ENCODE measurements at regions of chr1 and their contacts with region 1.

Region 1: GRCh38 chr1:212284744-212285684 is at the start of gene PPP2R5A:
- DNase-seq: peak; percentile 96 to 100 (median 98)
- ATAC-seq: peak; percentile 86
- H3K4me3 ChIP-seq: peak within 1 kb of the TSS; percentile 99
- H3K4me3 Mint-ChIP-seq: peak within 1 kb of the TSS; percentile 100
- H3K27ac ChIP-seq: peak within 1 kb of the TSS; percentile 90 to 98
- H3K27ac Mint-ChIP-seq: peak within 1 kb of the TSS; percentile 92
- H3K4me1 ChIP-seq: peaks cover 22% of the 10 kb centered on the region
- H3K4me1 Mint-ChIP-seq: peaks cover 37% of the 10 kb centered on the region
- H3K27me3 ChIP-seq: no peaks in the 10 kb centered on the region
- H3K27me3 Mint-ChIP-seq: peaks cover 4% of the 10 kb centered on the region
- CTCF ChIP-seq: peak; percentile 50
- total RNA-seq, gene PPP2R5A: 44.3 to 46.2 TPM

Region 2: DNA sequence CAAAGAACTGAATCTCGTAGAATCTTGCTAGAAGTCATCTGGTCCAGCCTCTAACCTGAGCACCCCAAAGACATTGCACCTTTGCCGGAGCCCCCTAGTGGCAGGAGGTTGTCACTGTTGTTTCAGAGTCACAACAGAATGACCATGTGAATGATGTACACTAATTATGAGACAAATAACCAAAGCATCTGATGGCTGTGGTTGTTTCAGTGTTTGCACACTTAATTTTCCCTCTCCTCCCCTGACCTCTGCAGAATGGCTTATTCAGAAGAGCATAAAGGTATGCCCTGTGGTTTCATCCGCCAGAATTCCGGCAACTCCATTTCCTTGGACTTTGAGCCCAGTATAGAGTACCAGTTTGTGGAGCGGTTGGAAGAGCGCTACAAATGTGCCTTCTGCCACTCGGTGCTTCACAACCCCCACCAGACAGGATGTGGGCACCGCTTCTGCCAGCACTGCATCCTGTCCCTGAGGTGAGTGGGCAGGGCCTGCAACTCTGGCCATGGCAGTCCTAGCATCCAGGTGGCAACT is 932.0 kb before region 1 on chr1:
- CTCF ChIA-PET with region 1: no interaction called
- POLR2A ChIA-PET with region 1: no interaction called
- intact Hi-C with region 1: no loop called
- DNase-seq: peak in 13 of 14 experiments; percentile 32 to 87 (median 56)
- ATAC-seq: peak; percentile 85
- H3K4me3 ChIP-seq: peak overlapping the region; percentile 28
- H3K4me3 Mint-ChIP-seq: peak overlapping the region; percentile 86
- H3K27ac ChIP-seq: peak overlapping the region; percentile 11 to 15
- H3K27ac Mint-ChIP-seq: peak overlapping the region; percentile 87
- H3K4me1 ChIP-seq: peaks cover 52% of the 10 kb centered on the region
- H3K4me1 Mint-ChIP-seq: peaks cover 71% of the 10 kb centered on the region
- H3K27me3 ChIP-seq: no peaks in the 10 kb centered on the region
- H3K27me3 Mint-ChIP-seq: no peaks in the 10 kb centered on the region
- CTCF ChIP-seq: peak; percentile 58

Region 3: GRCh38 chr1:211675230-211676105 is 609.5 kb before region 1 on chr1 and contains the start of gene NEK2:
- CTCF ChIA-PET with region 1: no interaction called
- POLR2A ChIA-PET with region 1: interaction called, 5 read pairs
- intact Hi-C with region 1: loop called (anchors 5 kb)
- DNase-seq: peak; percentile 70 to 93 (median 79)
- ATAC-seq: peak; percentile 94
- H3K4me3 ChIP-seq: peak within 1 kb of the TSS; percentile 67
- H3K4me3 Mint-ChIP-seq: peak within 1 kb of the TSS; percentile 92
- H3K27ac ChIP-seq: no peak within 1 kb of the TSS
- H3K27ac Mint-ChIP-seq: peak within 1 kb of the TSS; percentile 73
- H3K4me1 ChIP-seq: peaks cover 15% of the 10 kb centered on the region
- H3K4me1 Mint-ChIP-seq: peaks cover 7% of the 10 kb centered on the region
- H3K27me3 ChIP-seq: no peaks in the 10 kb centered on the region
- H3K27me3 Mint-ChIP-seq: no peaks in the 10 kb centered on the region
- CTCF ChIP-seq: no peak
- total RNA-seq, gene NEK2: not detected

Region 4: DNA sequence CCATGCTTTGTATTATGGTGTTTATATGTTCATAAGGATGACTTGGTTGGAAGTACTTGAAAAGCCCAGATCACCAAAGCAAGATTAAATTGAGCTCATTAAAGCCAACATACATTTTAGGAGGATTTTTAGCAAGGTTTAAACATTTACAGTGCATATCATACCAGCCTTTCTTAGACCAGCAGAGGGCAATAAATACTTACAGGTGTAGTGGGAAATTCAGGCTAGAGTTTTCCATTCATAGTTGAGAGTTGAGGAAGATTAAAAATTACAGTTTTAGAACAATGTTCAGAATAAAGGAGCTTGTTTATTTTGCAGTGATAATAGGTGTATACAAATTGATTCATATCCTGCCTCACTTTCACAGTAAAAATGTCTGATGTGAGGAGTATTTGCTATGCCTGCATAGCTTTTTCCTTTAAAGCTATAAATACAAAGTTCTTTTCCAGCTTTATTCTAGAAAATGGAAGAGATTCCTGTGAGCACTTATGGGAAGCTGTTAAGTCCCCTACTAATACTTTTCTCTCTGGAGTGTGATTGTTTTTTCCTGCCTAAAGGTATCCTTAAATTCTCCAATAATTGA is 214.2 kb before region 1 on chr1:
- CTCF ChIA-PET with region 1: interaction called, 25 read pairs
- POLR2A ChIA-PET with region 1: interaction called, 12 read pairs
- intact Hi-C with region 1: loop called in 1 of 2 experiments (anchors 1 kb)
- DNase-seq: peak in 3 of 14 experiments; percentile 68 to 71 (median 70)
- ATAC-seq: peak; percentile 62
- H3K4me3 ChIP-seq: no peak overlapping the region
- H3K4me3 Mint-ChIP-seq: no peak overlapping the region
- H3K27ac ChIP-seq: no peak overlapping the region
- H3K27ac Mint-ChIP-seq: no peak overlapping the region
- H3K4me1 ChIP-seq: no peaks in the 10 kb centered on the region
- H3K4me1 Mint-ChIP-seq: no peaks in the 10 kb centered on the region
- H3K27me3 ChIP-seq: no peaks in the 10 kb centered on the region
- H3K27me3 Mint-ChIP-seq: no peaks in the 10 kb centered on the region
- CTCF ChIP-seq: peak; percentile 76

Region 5: GRCh38 chr1:212256369-212256768 is 28.6 kb before region 1 on chr1:
- CTCF ChIA-PET with region 1: no interaction called
- POLR2A ChIA-PET with region 1: interaction called, 44 read pairs
- intact Hi-C with region 1: loop called in 1 of 2 experiments (anchors 2 kb)
- DNase-seq: peak in 10 of 14 experiments; percentile 5 to 86 (median 35)
- ATAC-seq: peak; percentile 79
- H3K4me3 ChIP-seq: peak overlapping the region; percentile 25
- H3K4me3 Mint-ChIP-seq: peak overlapping the region; percentile 40
- H3K27ac ChIP-seq: peak overlapping the region; percentile 21 to 58
- H3K27ac Mint-ChIP-seq: peak overlapping the region; percentile 64
- H3K4me1 ChIP-seq: peaks cover 63% of the 10 kb centered on the region
- H3K4me1 Mint-ChIP-seq: peaks cover 78% of the 10 kb centered on the region
- H3K27me3 ChIP-seq: no peaks in the 10 kb centered on the region
- H3K27me3 Mint-ChIP-seq: no peaks in the 10 kb centered on the region
- CTCF ChIP-seq: no peak

Region 6: DNA sequence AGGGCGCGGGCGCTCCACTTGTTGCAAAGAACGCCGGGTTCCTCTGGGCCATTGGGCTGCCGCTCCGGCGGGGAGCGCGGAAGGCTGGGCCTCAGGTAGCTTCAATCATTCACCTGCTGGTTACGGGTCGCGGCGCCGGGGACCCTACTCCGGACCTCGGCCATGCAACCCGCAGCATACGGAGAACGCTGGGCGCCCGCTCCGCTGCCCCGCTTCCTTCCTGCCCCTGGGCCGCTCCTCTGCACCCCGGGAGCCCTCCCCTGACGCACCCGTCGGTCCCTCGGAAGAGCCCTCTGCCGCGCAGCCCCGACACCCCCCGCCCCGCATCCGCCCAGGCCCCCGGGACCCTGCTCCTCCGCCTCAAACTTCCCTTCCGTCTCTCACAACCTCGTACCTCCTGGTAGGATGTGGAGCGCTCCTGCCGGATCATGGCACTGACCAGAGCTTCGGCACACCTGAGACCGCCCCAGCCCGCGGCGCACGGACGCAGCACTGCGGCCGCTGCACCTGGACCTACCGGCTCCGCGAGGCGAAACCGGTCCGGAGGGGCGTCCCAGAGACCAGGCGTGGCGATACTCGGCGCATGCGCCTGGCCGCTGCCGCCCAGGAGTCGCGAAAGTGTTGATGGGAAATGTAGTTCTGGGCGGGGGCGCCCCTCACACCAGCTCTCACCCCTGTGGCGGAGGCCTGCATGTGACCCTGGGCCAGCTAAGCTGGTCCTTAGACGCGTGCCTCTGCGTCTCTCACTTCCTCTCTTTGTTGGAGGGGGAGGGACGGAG is 129.5 kb after region 1 on chr1 and contains the start of gene PACC1:
- CTCF ChIA-PET with region 1: no interaction called
- POLR2A ChIA-PET with region 1: interaction called, 7 read pairs
- intact Hi-C with region 1: loop called in 1 of 2 experiments (anchors 5 kb)
- DNase-seq: peak; percentile 70 to 95 (median 81)
- ATAC-seq: peak; percentile 85
- H3K4me3 ChIP-seq: peak within 1 kb of the TSS; percentile 76
- H3K4me3 Mint-ChIP-seq: peak within 1 kb of the TSS; percentile 89
- H3K27ac ChIP-seq: peak within 1 kb of the TSS; percentile 40 to 72
- H3K27ac Mint-ChIP-seq: peak within 1 kb of the TSS; percentile 82
- H3K4me1 ChIP-seq: peaks cover 30% of the 10 kb centered on the region
- H3K4me1 Mint-ChIP-seq: peaks cover 22% of the 10 kb centered on the region
- H3K27me3 ChIP-seq: no peaks in the 10 kb centered on the region
- H3K27me3 Mint-ChIP-seq: no peaks in the 10 kb centered on the region
- CTCF ChIP-seq: no peak
- total RNA-seq, gene PACC1: 1.8 to 2.1 TPM

Region 7: DNA sequence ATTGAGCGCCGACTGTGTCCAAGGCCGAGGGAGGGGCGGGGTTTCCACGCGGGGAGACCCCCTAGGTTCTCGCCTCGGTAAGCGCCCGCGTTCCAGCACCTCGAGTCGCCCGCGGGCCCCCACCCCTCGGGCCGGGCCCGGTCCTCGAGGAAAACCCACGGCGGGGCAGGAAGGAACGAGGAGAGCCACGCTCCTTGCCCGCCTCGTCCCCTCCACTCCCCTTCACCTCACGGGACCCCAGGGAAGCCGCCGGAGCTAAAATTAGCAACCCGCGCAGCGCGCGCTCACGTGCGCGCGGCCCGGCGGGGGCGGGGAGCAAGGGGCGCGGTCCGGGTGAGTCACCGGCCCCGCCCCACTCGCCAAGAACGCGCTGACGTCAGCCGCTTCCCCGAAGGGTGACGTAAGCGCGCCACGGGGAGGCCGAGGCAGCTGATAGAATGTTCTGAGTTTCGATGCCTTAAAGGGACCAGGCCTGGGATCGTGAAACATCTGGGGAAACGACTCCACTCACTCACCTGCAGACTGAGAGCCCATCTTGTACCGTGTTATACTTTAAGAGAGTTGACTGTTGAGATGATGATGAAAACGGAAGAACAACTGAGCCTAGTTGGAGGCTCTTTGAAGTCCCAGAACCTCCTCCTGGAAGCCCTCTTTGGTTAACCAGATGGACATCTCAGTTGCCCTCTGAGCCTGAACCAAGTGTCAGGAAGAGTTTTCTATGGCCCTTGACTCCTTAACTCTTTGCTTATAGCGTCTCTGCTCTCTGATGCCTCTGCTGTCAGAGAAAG is 273.9 kb after region 1 on chr1:
- CTCF ChIA-PET with region 1: no interaction called
- POLR2A ChIA-PET with region 1: interaction called, 4 read pairs
- intact Hi-C with region 1: loop called in 1 of 2 experiments (anchors 2 kb)
- DNase-seq: peak; percentile 85 to 98 (median 90)
- ATAC-seq: peak; percentile 93
- H3K4me3 ChIP-seq: peak overlapping the region; percentile 72
- H3K4me3 Mint-ChIP-seq: peak overlapping the region; percentile 88
- H3K27ac ChIP-seq: peak overlapping the region; percentile 77 to 81
- H3K27ac Mint-ChIP-seq: peak overlapping the region; percentile 85
- H3K4me1 ChIP-seq: peaks cover 16% of the 10 kb centered on the region
- H3K4me1 Mint-ChIP-seq: peaks cover 6% of the 10 kb centered on the region
- H3K27me3 ChIP-seq: no peaks in the 10 kb centered on the region
- H3K27me3 Mint-ChIP-seq: no peaks in the 10 kb centered on the region
- CTCF ChIP-seq: no peak